Caco-2 (cell line): ENCODE measurements at regions of chr5 and their contacts with region 1.

Region 1: GRCh38 chr5:30324083-30324482 is 869.4 kb upstream of the CDH6 start:
- DNase-seq: peak; percentile 34 to 37
- H3K4me3 ChIP-seq: no peak overlapping the region
- H3K4me3 Mint-ChIP-seq: no peak overlapping the region
- H3K27ac Mint-ChIP-seq: no peak overlapping the region
- H3K4me1 ChIP-seq: no peaks in the 10 kb centered on the region
- H3K4me1 Mint-ChIP-seq: no peaks in the 10 kb centered on the region
- H3K27me3 ChIP-seq: no peaks in the 10 kb centered on the region
- H3K27me3 Mint-ChIP-seq: peaks cover 2% of the 10 kb centered on the region
- CTCF ChIP-seq: peak in 1 of 2 experiments; percentile 43

Region 2: DNA sequence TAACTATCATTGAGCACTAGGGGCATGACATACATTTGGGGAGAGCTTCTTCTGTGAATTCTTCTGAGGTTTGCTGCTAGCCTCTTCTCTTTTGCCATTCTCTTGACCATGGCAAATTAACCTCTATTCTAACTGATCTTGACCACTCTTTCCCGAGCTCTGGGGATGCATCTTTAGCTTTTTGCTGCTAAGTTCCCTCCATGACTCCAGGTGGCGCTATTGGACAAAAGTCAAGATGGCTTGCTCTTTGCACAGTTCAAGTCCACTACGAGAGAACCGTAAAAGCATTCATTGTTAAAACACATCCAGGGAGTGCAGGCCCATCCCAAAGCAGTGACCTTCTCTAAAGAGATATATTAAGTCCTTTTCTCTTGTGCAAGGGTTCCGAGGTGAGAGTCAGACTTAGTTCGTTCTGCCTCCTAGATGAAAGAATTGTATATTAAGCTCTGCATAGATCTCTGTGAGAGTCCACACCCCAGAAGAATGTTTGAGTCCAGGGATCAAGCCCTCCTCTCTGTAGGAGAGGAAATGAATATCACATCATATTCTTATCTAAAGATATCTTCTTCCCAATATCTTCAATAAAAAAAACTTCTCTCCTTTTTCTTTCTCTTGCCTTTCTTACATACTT is 283.5 kb before region 1 on chr5:
- CTCF ChIA-PET with region 1: interaction called, 7 read pairs
- POLR2A ChIA-PET with region 1: no interaction called
- intact Hi-C with region 1: loop called (anchors 1 kb)
- DNase-seq: peak; percentile 56 to 69
- H3K4me3 ChIP-seq: no peak overlapping the region
- H3K4me3 Mint-ChIP-seq: no peak overlapping the region
- H3K27ac Mint-ChIP-seq: no peak overlapping the region
- H3K4me1 ChIP-seq: no peaks in the 10 kb centered on the region
- H3K4me1 Mint-ChIP-seq: no peaks in the 10 kb centered on the region
- H3K27me3 ChIP-seq: no peaks in the 10 kb centered on the region
- H3K27me3 Mint-ChIP-seq: no peaks in the 10 kb centered on the region
- CTCF ChIP-seq: peak; percentile 75 to 90